A673 (cell line): ENCODE measurements at regions of chr2 and their contacts with region 1.

Region 1: GRCh38 chr2:43622931-43623451 is 14.1 kb upstream of the PLEKHH2 start:
- DNase-seq: peak; percentile 37
- H3K4me3 ChIP-seq: no peak overlapping the region
- H3K27ac ChIP-seq: no peak overlapping the region
- H3K4me1 ChIP-seq: peaks cover 4% of the 10 kb centered on the region
- H3K27me3 ChIP-seq: peaks cover 5% of the 10 kb centered on the region
- CTCF ChIP-seq: no peak

Region 2: GRCh38 chr2:43455731-43456642 is 167.0 kb before region 1 on chr2:
- CTCF ChIA-PET with region 1: no interaction called
- POLR2A ChIA-PET with region 1: no interaction called
- intact Hi-C with region 1: no loop called
- DNase-seq: no peak
- H3K4me3 ChIP-seq: no peak overlapping the region
- H3K27ac ChIP-seq: no peak overlapping the region
- H3K4me1 ChIP-seq: peaks cover 26% of the 10 kb centered on the region
- H3K27me3 ChIP-seq: no peaks in the 10 kb centered on the region
- CTCF ChIP-seq: no peak

Region 3: GRCh38 chr2:43569921-43570320 is 53.1 kb before region 1 on chr2:
- CTCF ChIA-PET with region 1: no interaction called
- POLR2A ChIA-PET with region 1: no interaction called
- intact Hi-C with region 1: no loop called
- DNase-seq: no peak
- H3K4me3 ChIP-seq: no peak overlapping the region
- H3K27ac ChIP-seq: no peak overlapping the region
- H3K4me1 ChIP-seq: no peaks in the 10 kb centered on the region
- H3K27me3 ChIP-seq: no peaks in the 10 kb centered on the region
- CTCF ChIP-seq: no peak

Region 4: DNA sequence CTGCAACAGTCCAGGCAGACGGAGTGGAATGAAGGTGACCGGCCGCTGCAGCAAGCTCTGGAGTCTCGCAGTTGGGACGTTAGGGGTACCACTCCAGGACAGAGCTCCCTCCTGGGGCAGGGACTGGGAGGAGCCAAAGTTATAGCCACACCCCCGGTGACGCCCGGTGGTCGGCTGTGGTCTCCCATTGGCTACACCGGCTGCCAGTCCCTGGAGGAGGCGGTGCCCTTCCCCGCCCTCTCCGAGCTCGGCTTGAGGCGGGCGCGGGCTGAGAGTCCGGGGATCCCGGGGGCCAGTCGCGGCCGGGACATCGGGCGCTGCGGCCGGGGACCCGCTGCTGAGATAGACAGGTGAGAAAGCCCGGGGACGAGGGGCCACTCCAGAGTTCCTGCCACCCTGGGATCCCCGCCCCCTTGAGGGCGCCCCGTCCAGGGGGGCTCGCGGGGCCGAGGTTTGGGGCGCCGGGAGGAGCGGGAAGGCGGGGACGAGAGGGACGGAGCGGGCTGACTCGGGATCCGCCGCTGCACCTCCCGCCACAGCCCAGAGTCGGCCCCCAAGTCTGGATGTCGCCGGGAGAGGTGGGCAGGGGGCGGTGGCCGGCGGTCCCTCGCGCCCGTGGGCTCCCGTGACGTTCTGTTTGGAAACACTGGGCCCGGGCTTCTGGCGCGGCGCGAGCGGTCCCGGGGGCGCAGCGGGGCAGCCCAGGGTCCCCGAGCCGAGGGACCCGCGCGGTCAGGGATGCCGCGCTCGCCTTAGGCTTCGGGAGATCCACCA is 14.2 kb after region 1 on chr2 and contains the start of gene PLEKHH2:
- CTCF ChIA-PET with region 1: interaction called, 5 read pairs
- POLR2A ChIA-PET with region 1: interaction called, 16 read pairs
- intact Hi-C with region 1: no loop called
- DNase-seq: peak; percentile 90
- H3K4me3 ChIP-seq: peak within 1 kb of the TSS; percentile 81
- H3K27ac ChIP-seq: no peak within 1 kb of the TSS
- H3K4me1 ChIP-seq: peaks cover 17% of the 10 kb centered on the region
- H3K27me3 ChIP-seq: no peaks in the 10 kb centered on the region
- CTCF ChIP-seq: no peak
- total RNA-seq, gene PLEKHH2: 2.2 and 4.7 TPM in 2 replicates